ENCODE measurements at regions of chr19 and their contacts with region 1.

Region 1: GRCh38 chr19:43619262-43620060 is at the start of gene ZNF428:
- DNase-seq: peak; percentile 94
- H3K4me3 ChIP-seq: peak within 1 kb of the TSS; percentile 70 to 87 (median 82)
- H3K27ac ChIP-seq: peak within 1 kb of the TSS; percentile 91 to 98 (median 94)
- H3K4me1 ChIP-seq: peaks cover 12 to 36% (median 22%) of the 10 kb centered on the region in 4 donors
- H3K27me3 ChIP-seq: no peaks in the 10 kb centered on the region
- CTCF ChIP-seq: no peak
- EP300 ChIP-seq: no peak
- POLR2A ChIP-seq: peak; percentile 41
- total RNA-seq, gene ZNF428: 33.2 to 61.3 (median 47.8) TPM

Region 2: GRCh38 chr19:43668406-43669158 is 49.1 kb after region 1 on chr19:
- intact Hi-C with region 1: loop called (anchors 5 kb)
- DNase-seq: peak; percentile 100
- H3K4me3 ChIP-seq: peak overlapping the region; percentile 61 to 74 (median 63)
- H3K27ac ChIP-seq: peak overlapping the region; percentile 90 to 97 (median 93)
- H3K4me1 ChIP-seq: peaks cover 22 to 29% (median 28%) of the 10 kb centered on the region in 4 donors
- H3K27me3 ChIP-seq: no peaks in the 10 kb centered on the region
- CTCF ChIP-seq: no peak
- EP300 ChIP-seq: peak; percentile 51
- POLR2A ChIP-seq: peak; percentile 63

Measured in esophagus muscularis mucosa (tissue), 4 donors.